Posterior cingulate gyrus (tissue), 11 donors: ENCODE measurements at regions of chr17 and their contacts with region 1.

Region 1: GRCh38 chr17:46139432-46140210 is 53.6 kb downstream of the KANSL1 start:
- DNase-seq: no peak

Region 2: GRCh38 chr17:46092991-46093390 is 46.6 kb before region 1 on chr17:
- intact Hi-C with region 1: loop called (anchors 5 kb)
- DNase-seq: no peak

Region 3: DNA sequence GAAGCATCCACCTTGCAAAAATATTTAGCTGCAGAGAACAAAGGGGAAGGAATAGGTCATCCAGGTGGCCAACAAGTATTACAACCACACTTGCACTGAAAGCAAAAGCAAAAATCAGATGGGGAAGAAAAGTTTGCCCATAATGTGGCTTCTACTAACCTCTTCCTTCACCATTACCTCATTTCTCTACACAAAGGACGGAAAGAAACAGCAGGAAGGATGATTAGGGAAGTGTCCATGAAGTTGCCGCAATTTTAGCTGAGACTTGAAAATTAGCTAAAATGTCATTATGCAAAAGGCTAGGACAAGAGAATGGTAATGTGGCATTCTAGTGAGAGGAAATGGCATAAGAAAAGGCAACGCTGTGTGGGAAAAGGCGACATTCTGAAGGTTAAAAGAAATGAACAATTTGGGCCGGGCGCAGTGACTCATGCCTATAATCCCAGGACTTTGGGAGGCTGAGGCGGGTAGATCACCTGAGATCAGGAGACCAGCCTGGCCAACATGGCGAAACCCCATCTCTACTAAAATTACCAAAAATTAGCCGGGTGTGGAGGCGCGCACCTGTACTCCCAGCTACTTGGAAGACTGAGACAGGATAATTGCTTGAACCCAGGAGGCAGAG is 39.9 kb after region 1 on chr17:
- intact Hi-C with region 1: loop called (anchors 5 kb)
- DNase-seq: no peak